ENCODE measurements at regions of chr12 and their contacts with region 1.

Region 1: DNA sequence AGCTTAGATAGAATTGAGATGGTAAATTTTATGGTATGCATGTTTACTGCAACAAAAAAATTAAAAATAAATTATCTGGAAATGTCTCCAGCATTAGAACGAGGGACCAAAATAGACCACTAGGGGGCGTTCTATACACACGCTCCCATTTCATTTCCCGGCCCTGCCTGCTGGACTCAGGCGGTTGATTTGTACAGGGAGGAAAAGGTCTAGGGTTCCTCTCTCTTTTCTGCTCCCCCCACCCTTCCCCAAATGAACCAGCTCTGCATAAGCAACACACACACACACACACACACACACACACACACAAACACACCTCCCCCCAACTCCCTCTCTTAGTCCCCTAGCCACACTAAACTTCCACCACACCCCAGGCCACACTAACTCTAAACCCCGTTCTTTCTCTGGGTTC is 7.8 kb upstream of the DTX1 start:
- DNase-seq: peak; percentile 81
- H3K4me3 ChIP-seq: no peak overlapping the region; a peak in 1 of 4 replicates
- H3K27ac ChIP-seq: no peak overlapping the region
- H3K4me1 ChIP-seq: no peaks in the 10 kb centered on the region
- H3K27me3 ChIP-seq: 0 out of 2 replicates have a peak, but pooled peaks cover 7% of the 10 kb centered on the region
- CTCF ChIP-seq: peak; percentile 91
- EP300 ChIP-seq: no peak
- RAD21 ChIP-seq: peak; percentile 91

Region 2: GRCh38 chr12:112535017-112535416 is 513.7 kb before region 1 on chr12:
- CTCF ChIA-PET with region 1: no interaction called
- POLR2A ChIA-PET with region 1: no interaction called
- DNase-seq: no peak
- H3K4me3 ChIP-seq: no peak overlapping the region
- H3K27ac ChIP-seq: no peak overlapping the region
- H3K4me1 ChIP-seq: peaks cover 0 to 5% of the 10 kb centered on the region in 2 experiments; a peak in 1 of 4 replicates
- H3K27me3 ChIP-seq: no peaks in the 10 kb centered on the region
- CTCF ChIP-seq: no peak
- EP300 ChIP-seq: no peak
- RAD21 ChIP-seq: no peak

Region 3: DNA sequence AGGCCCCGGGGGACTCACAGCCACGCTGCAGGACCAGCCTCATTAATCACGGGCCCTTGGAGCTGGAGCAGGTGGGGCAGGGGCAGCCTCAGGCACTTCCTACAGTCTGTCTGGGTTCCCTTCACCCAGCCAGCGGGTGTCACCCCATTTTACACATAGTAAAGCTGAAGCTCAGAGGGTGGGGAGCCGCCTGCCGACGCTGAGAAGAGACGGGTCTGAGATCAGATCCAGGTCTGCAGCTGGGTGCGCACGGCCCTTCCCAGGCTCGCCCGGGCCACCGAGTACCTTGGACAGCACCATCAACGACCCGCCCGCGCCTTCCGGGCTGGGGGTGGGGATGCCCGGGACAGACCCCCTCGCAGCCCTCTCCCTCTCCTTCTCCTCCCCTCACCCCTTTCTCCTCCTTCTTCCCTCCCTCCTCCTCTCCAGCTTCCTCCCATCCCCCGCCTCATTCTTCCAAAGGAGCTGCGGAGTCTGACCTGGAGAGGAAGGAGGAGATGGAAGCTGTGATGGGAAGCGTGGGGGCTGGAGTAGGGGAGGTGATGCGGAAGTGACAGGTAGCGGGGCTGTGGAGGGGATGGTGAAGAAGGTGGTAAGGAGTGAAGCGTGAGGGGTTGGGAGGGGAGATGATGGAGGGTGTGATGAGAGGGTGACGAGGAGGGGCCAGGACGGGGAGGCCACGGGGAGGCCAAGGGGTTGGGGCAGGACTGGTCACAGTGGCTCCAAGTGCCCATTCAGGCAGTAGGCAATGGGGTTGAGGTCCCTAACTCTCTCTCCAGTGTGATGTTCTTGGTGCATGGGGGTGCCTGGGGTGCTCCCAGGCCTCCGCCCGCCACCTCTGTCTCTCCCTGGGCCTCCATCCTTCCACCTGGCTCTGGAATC is 16.6 kb after region 1 on chr12:
- CTCF ChIA-PET with region 1: interaction called, 31 read pairs
- POLR2A ChIA-PET with region 1: no interaction called
- DNase-seq: peak; percentile 63
- H3K4me3 ChIP-seq: no peak overlapping the region
- H3K27ac ChIP-seq: no peak overlapping the region
- H3K4me1 ChIP-seq: peaks cover 0 to 18% of the 10 kb centered on the region in 2 experiments; a peak in 1 of 4 replicates
- H3K27me3 ChIP-seq: no peaks in the 10 kb centered on the region
- CTCF ChIP-seq: no peak
- EP300 ChIP-seq: no peak
- RAD21 ChIP-seq: no peak

Region 4: DNA sequence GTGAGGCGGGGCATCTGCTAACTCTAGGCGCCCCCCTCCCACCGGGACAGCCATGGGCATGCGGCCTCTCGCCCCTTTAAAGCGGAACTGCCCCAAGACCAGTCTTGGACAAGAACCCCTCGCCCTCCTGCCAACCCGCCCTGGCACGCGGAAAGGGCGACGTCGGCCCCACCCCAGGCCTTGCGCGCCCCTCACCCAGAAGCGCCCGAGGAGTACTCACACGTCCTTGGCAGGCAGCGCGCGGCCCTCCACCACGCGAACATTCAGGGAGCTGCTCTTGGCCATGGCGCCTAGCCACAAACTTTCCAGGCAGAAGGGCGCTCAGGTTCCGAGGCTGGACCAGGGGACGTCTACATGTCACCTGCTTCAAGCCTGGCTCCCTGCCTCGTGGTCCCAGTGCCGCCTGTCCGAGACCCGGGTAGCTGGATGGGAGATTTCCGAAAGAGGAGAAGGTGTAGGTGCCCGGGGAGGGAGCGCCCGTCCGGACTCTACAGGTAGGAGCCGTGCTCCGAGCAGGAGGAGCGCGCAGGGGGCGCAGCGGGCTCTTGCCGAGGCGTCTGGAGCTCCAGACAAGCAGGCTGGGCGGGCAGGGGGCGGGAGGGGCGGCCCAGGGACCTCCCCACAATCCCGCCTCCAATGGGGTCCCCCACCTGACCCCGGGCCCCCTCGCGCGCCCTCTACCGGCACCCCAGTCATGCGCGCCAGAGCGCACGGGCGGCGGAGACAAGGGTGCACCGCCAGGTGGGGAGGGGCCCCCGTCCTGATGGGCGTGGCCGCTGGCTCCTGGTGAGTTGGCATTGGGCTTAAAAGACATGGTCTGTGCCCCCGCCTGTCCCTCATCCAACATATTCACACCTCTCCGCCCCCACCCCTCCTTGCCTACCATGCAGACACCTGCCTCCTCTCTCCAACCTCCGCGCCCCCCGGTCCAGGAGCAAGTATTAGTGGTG is 86.7 kb after region 1 on chr12 and contains the start of gene RASAL1:
- CTCF ChIA-PET with region 1: interaction called, 11 read pairs
- POLR2A ChIA-PET with region 1: no interaction called
- DNase-seq: peak; percentile 81
- H3K4me3 ChIP-seq: no peak within 1 kb of the TSS; a peak in 1 of 4 replicates
- H3K27ac ChIP-seq: no peak within 1 kb of the TSS
- H3K4me1 ChIP-seq: no peaks in the 10 kb centered on the region; a peak in 1 of 4 replicates
- H3K27me3 ChIP-seq: no peaks in the 10 kb centered on the region
- CTCF ChIP-seq: peak; percentile 27; the same call in 1 of the 2 replicates
- EP300 ChIP-seq: no peak
- RAD21 ChIP-seq: no peak
- polyA plus RNA-seq, gene RASAL1: not detected in 2 replicates

Region 5: DNA sequence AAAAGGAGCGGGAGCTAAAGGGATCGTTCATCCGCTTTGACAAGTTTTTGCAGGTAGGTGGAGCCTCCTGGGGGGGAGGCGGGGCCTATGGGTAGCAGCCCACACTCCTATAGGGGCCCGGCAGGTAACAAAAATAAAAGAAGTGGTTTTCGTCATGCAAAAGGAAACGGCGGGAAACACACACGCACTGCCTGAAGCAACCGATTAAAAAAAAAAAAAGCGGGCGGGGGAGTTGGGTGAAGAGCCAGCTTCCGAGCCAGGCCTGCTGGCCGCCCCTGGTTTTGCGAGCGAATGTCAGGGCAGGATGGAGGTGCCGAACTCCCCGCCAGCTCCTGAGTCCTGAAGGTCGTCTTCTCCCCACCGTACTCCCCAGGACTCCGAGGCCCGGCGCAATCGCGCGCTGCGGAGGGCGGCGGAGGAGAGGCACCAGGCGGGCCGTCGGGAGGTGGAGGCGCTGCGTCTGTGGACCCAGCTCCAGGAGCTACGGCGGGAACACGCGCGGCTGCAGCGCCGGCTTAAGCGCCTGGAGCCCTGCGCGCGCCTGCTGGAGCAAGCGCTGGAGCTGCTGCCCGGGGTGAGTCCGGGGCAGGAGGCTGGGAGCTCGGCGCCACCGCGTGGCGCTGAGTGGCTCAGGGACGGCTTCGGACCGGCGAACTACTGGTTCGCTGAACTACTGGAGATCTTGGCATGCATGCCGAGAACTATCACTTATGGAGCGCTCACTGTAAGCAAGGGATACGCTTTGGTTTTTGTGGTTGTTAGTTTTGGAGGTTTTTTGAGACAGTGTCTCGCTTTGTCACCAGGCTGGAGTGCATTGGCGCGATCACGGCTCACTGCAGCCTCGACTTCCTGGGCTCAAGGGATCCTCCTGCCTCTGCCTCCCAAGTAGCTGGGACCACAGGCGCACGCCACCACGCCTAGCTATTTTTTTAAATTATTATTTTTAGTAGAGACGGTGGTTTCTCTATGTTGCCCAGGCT is 104.4 kb after region 1 on chr12:
- CTCF ChIA-PET with region 1: interaction called, 36 read pairs
- POLR2A ChIA-PET with region 1: no interaction called
- DNase-seq: peak; percentile 93
- H3K4me3 ChIP-seq: peak overlapping the region; percentile 34 to 56; a peak in 3 of 4 replicates
- H3K27ac ChIP-seq: no peak overlapping the region
- H3K4me1 ChIP-seq: peaks cover 5 to 11% of the 10 kb centered on the region in 2 experiments; a peak in 2 of 4 replicates
- H3K27me3 ChIP-seq: peaks cover 24% of the 10 kb centered on the region
- CTCF ChIP-seq: peak; percentile 53
- EP300 ChIP-seq: no peak
- RAD21 ChIP-seq: peak; percentile 69

Region 6: DNA sequence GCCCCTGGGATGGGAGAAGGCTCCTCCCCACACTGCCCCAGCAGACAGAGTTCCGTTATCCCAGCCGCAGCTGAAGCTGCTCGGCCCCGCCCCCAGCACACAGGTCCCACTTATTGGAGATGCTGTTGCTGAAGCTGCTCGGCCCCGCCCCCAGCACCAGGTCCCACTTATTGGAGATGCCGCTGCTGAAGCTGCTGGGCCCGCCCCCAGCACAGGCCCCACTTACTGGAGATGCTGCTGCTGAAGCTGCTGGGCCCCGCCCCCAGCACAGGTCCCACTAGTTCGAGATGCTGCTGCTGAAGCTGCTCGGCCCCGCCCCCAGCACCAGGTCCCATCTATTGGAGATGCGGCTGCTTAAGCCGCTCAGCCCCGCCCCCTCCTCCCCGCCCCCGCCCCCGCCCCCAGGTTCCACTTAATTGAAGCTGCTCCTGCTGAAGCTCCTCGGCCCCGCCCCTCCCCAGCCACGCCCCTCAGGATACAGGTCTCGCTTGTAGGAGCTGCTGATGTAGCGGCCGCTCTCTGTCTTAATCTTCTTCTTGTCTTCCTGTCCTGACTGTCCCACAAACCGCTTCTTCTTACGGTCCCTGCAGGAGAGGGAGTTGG is 112.8 kb after region 1 on chr12:
- CTCF ChIA-PET with region 1: interaction called, 36 read pairs
- POLR2A ChIA-PET with region 1: no interaction called
- DNase-seq: peak; percentile 95
- H3K4me3 ChIP-seq: no peak overlapping the region; a peak in 1 of 4 replicates
- H3K27ac ChIP-seq: peak overlapping the region in 1 of 2 experiments; percentile 76; a peak in 2 of 4 replicates
- H3K4me1 ChIP-seq: peaks cover 7 to 23% of the 10 kb centered on the region in 2 experiments; a peak in 2 of 4 replicates
- H3K27me3 ChIP-seq: no peaks in the 10 kb centered on the region
- CTCF ChIP-seq: no peak
- EP300 ChIP-seq: no peak
- RAD21 ChIP-seq: no peak